Calu3 (cell line): ENCODE measurements at regions of chr6 and their contacts with region 1.

Region 1: DNA sequence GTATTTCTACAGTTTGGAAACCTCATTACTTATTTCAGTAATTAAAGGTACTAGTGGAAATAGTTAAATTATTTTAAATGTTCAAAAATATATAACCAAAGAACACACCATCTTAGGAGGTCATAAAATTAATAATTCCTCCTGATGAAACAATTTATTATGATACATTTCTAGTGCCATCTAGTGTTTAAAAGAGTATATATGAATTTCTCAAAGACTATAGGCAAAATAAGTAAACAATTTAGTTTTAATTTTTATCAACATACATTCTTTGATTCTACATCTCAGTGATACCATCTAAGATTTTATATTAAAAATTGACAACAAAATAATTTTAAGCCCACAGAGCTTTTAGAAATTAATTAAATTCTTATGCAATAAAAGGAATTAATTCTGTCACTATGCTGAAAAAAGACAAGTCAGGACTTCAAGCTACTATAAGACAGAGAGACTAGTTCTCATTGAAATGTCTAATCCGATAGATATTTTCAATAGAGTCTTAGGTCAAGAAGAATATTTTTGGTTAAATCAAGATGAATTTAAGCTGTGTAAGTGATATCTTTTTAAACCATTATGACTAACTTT is 107.8 kb upstream of the RNF217 start:
- DNase-seq: no peak
- H3K4me3 Mint-ChIP-seq: no peak overlapping the region
- H3K27ac Mint-ChIP-seq: no peak overlapping the region
- H3K4me1 Mint-ChIP-seq: no peaks in the 10 kb centered on the region
- H3K27me3 Mint-ChIP-seq: no peaks in the 10 kb centered on the region
- CTCF ChIP-seq: no peak

Region 2: DNA sequence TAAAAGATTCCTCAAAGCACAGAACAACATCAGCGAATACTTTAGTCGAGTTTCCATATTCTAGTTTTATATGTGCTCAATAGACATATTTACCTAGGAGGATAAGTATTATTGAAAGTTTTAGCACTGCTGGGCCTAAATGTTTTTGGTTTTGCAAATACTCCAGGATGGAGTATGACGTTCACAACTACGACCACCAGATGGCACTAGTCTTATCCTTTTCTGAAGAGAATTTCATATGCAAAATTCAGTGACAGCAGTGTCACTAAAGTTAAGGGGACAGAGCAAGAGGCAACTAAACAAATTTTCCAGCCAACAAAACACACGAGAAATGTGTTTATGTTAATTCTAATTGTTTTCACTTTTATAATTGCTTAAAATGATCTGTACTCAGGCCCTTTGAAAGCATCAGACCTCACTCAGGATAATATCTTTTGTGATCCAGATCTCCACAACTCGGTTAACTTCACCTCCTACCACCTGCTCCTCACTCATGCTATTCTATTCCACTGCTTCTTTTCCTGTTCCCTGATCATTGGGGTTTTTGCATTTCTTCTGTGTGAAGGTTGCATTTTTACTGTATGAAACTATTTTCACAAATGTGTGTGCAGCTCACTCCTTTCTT is 1438.5 kb before region 1 on chr6:
- CTCF ChIA-PET with region 1: no interaction called
- intact Hi-C with region 1: loop called (anchors 5 kb)
- DNase-seq: peak; percentile 48
- H3K4me3 Mint-ChIP-seq: no peak overlapping the region
- H3K27ac Mint-ChIP-seq: no peak overlapping the region
- H3K4me1 Mint-ChIP-seq: no peaks in the 10 kb centered on the region
- H3K27me3 Mint-ChIP-seq: no peaks in the 10 kb centered on the region
- CTCF ChIP-seq: peak; percentile 29

Region 3: DNA sequence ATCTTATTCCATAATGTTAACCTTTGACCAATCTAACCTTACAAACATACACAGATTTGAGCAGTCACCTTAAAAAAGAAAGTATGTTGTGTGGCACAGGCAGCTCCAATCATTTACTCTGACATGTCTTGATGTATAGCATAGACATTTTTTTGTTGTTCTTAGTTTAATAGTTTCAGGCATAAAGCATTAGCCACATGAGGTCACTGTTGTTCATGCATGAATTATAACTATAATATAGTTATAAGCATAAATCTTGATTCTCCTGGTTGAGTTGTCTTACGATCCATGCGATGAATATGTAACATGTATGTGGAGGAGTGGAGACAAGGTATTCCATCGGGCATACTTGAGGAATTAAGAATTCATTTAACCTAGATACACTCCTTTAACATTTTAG is 1076.9 kb before region 1 on chr6:
- CTCF ChIA-PET with region 1: no interaction called
- intact Hi-C with region 1: loop called (anchors 10 kb)
- DNase-seq: no peak
- H3K4me3 Mint-ChIP-seq: no peak overlapping the region
- H3K27ac Mint-ChIP-seq: no peak overlapping the region
- H3K4me1 Mint-ChIP-seq: no peaks in the 10 kb centered on the region
- H3K27me3 Mint-ChIP-seq: no peaks in the 10 kb centered on the region
- CTCF ChIP-seq: no peak